HEK293 (cell line): ENCODE measurements at regions of chr1 and their contacts with region 1.

Region 1: DNA sequence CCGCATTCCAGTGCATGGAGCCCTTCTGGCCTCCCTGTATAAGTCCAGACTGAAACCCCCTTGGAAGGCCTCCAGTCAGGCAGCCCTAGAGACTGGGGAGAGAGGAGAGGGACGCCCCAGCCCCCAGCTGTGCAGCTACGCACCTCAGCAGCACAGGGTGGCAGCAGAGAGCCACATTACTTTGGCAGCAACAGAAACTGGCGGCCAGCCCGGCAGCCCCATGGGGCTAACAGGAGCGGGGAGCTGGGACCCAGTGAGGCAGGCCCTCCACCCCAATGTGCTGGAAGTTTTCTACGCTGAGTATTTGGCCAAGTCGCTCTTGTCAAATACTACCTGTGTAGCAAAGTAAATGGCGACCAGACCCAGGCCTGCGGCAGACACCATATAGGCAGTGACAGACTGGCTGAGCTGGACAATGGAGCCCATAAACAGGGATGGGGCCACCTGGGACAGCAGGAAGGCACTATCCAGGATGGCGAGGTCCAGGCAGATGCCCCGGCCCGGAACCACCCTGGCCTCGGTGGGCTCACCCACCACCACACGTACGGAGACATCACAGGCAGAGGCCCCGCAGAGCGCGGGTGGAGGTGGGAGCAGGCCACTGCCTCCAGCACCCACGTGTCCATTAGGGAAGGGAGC is 21.2 kb downstream of the SLC45A3 start:
- H3K4me3 ChIP-seq: no peak overlapping the region
- H3K27ac ChIP-seq: no peak overlapping the region
- H3K4me1 ChIP-seq: no peaks in the 10 kb centered on the region
- CTCF ChIP-seq: peak; percentile 87

Region 2: DNA sequence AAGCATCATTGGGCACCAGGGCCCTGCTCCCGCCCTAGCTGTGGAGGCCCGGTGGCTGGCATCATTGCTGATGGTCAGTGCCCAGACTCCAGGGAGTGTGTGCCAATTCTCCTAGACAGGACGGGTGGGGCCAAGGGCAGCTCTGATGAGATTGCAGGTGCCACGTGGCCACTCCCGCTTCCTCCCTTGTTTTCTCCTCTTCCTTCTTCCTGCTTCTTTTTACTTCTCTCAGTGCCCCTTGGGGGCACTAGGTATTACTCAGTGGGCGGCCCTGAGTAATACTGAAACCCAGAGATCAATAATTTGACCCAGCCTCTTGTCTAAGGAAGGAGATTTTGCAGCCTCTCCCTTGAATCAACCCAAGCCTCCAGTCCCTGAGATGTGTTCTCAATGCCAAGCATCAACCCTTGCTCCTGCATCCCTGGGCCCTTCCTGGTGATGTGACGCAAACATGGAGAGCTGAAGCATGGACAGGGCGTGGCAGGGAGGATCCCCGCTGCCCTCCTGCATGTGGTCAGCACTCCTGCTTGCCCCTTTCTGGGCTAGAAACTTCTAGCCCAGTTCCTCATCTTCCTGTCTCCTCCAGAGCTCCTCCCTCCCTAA is 122.2 kb before region 1 on chr1:
- CTCF ChIA-PET with region 1: interaction called, 17 read pairs
- POLR2A ChIA-PET with region 1: no interaction called
- H3K4me3 ChIP-seq: no peak overlapping the region
- H3K27ac ChIP-seq: no peak overlapping the region
- H3K4me1 ChIP-seq: no peaks in the 10 kb centered on the region
- CTCF ChIP-seq: no peak

Region 3: DNA sequence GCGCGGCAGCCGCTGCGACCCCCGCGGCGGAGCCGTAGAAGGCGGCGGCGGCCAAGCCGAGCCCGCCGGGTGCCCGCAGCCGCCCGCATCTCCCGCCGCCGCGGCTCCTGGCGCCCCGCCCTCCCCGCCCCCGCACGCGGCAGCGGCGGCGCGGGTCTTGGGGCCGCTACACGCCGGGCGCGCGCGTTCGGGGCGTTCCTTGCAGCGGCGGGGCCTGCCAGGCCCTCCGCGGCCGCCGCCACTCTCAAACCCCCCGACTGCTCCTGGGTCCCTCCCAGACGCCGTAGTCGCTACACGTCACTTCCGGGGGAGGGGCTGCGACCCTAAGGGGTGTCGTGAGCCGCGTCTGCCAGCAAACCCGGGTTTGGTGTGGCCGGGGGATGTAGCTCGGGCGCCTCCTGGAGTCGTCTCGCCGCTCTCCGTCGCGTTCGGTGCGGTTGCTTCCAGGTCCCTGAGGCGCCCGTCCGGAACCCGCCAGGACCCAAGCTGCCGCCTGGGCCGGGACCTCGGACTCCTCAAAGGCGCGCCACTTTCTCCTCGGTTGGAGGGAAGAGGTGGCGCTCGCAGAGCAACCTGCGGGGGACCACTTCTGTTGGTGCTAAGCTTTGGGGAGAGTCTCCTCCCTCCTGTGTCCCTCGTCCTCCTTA is 27.2 kb before region 1 on chr1 and contains the start of gene ELK4:
- CTCF ChIA-PET with region 1: interaction called, 54 read pairs
- POLR2A ChIA-PET with region 1: interaction called, 15 read pairs
- H3K4me3 ChIP-seq: peak within 1 kb of the TSS; percentile 83
- H3K27ac ChIP-seq: peak within 1 kb of the TSS; percentile 97
- H3K4me1 ChIP-seq: no peaks in the 10 kb centered on the region
- CTCF ChIP-seq: peak; percentile 95

Region 4: GRCh38 chr1:205680073-205680851 is 21.2 kb after region 1 on chr1 and contains the start of gene SLC45A3:
- CTCF ChIA-PET with region 1: interaction called, 65 read pairs
- POLR2A ChIA-PET with region 1: no interaction called
- H3K4me3 ChIP-seq: peak within 1 kb of the TSS; percentile 67
- H3K27ac ChIP-seq: peak within 1 kb of the TSS; percentile 58; the same call in 1 of the 2 replicates
- H3K4me1 ChIP-seq: no peaks in the 10 kb centered on the region
- CTCF ChIP-seq: no peak

Region 5: GRCh38 chr1:205711104-205712020 is 52.3 kb after region 1 on chr1:
- CTCF ChIA-PET with region 1: interaction called, 359 read pairs
- POLR2A ChIA-PET with region 1: interaction called, 5 read pairs
- H3K4me3 ChIP-seq: no peak overlapping the region
- H3K27ac ChIP-seq: no peak overlapping the region
- H3K4me1 ChIP-seq: peaks cover 7% of the 10 kb centered on the region
- CTCF ChIP-seq: no peak; the same call in 1 of the 2 replicates

Region 6: DNA sequence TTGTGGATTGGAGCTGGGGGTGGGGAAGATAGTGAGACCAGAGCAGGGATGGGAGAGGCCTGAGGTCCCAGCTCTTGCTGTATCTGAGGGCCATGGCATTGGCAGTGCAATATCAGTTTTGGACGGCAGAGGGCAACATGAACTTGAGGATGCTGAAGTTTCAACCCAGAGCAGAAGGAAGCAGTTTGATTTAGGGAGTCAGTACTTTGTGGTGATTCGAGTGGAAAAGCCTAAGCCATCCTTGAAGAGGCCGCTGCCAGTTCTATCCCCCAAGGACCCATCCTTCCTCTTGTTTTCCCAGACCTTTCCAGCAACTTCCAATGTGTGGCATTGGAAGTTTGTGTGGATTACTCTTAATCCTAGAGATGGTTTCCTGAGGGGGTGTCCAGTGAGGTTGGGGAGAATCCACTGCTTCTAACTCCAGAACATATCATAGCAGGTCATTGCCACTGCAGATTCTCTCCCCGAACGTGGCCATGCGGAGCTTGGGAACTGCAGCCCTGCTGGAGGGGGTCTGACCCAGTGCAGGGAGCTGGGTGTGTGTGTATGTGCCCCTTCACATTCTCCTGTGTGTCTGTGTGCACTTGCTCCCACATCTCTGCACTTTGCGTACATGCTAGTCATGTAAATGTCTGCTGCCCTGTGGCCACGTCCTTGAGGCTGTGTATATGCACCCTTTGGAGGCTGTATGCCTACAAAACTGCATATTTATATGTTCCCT is 260.1 kb after region 1 on chr1:
- CTCF ChIA-PET with region 1: interaction called, 11 read pairs
- POLR2A ChIA-PET with region 1: no interaction called
- H3K4me3 ChIP-seq: no peak overlapping the region
- H3K27ac ChIP-seq: no peak overlapping the region
- H3K4me1 ChIP-seq: no peaks in the 10 kb centered on the region
- CTCF ChIP-seq: peak; percentile 95